GM10248 (cell line): ENCODE measurements at regions of chr4 and their contacts with region 1.

Region 1: DNA sequence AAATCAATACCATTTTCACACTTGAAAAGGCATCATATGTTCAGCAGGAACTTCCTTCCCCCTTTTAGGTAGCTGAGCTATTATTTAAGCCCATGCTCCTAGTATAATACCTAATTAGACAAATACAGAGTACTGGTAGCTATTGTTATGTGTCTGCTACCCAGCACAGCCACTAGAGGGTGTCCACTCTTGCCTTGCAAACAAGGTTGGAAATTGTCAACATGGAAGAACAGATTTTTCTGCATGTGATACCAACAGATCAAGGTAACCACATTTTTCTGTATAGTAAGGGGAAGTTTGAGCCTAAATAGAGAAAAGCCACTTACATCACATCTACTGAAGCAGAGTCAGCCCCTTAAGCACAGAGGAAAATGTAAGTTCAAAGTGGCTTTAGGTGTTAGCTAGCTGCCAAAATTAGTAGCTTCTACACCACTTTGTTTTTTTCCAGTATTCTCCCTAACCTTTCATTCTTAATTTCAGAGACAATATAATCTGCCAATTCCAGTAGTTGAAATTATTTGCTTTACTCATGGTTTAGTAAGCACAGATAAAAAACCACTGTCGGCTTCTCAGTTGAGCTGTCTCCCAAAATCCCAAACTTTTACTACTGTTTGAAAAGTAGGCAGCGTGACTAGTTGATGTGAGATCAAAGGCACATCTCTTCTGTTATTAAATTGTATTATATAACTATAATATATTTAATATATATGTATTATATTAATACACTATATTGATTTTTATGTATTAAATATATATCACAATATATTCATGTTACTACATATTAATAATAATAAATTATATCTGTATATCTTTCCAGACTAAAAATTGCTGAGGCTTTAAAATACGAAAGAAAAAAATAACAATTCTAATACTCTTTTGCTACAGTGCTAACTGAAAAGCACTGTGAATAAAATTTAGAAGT is 38.2 kb downstream of the EDNRA start:
- DNase-seq: peak; percentile 40
- CTCF ChIP-seq: peak; percentile 86

Region 2: GRCh38 chr4:147539959-147540358 is 20.9 kb after region 1 on chr4:
- CTCF ChIA-PET with region 1: interaction called, 13 read pairs
- POLR2A ChIA-PET with region 1: no interaction called
- DNase-seq: no peak
- CTCF ChIP-seq: no peak

Region 3: GRCh38 chr4:147550626-147551250 is 31.6 kb after region 1 on chr4:
- CTCF ChIA-PET with region 1: interaction called, 10 read pairs
- POLR2A ChIA-PET with region 1: no interaction called
- DNase-seq: peak; percentile 37
- CTCF ChIP-seq: no peak

Region 4: DNA sequence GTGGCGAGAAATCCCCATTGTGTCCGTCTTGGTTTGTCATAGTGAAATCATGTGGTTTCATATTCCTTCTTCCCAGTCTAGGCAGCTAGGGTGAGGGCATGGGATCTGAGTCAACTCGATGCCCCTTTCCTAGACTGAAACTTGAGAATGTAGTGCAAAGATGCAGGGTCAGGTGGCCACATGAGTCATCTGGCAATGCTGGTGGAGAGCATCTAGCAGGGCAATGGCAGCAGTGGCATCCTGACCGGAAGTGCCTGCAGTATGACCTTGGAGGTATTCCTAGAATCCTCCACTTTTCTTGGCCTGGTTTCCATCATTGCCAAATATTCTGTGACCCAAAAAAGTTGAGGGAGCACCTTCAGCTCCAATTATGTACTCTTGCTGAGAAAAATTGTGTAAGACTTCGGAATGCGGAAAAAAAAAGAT is 59.0 kb after region 1 on chr4:
- CTCF ChIA-PET with region 1: interaction called, 21 read pairs
- POLR2A ChIA-PET with region 1: no interaction called
- DNase-seq: no peak
- CTCF ChIP-seq: no peak

Region 5: GRCh38 chr4:147596981-147597380 is 77.9 kb after region 1 on chr4:
- CTCF ChIA-PET with region 1: interaction called, 12 read pairs
- POLR2A ChIA-PET with region 1: no interaction called
- DNase-seq: no peak
- CTCF ChIP-seq: no peak